ENCODE measurements at regions of chr6 and their contacts with region 1.

Region 1: DNA sequence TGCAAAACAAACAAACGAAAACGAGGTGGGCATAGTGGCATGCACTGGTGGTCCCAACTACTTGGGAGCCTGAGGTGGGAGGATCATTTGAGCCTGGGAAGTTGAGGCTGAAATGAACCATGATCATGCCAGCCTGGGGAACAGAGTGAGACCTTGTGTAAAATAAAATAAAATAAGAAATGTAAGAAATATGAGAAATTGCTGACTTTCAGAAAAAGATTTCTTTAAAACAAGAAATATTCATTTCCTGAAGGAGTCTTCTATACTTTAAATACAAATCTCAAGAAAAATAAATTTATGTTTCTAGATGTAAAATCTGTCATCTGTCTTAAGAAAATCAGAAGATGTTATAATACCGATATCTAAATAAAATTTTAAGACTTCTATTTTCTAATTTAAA is 96.7 kb upstream of the ENPP5 start:
- DNase-seq: no peak

Region 2: DNA sequence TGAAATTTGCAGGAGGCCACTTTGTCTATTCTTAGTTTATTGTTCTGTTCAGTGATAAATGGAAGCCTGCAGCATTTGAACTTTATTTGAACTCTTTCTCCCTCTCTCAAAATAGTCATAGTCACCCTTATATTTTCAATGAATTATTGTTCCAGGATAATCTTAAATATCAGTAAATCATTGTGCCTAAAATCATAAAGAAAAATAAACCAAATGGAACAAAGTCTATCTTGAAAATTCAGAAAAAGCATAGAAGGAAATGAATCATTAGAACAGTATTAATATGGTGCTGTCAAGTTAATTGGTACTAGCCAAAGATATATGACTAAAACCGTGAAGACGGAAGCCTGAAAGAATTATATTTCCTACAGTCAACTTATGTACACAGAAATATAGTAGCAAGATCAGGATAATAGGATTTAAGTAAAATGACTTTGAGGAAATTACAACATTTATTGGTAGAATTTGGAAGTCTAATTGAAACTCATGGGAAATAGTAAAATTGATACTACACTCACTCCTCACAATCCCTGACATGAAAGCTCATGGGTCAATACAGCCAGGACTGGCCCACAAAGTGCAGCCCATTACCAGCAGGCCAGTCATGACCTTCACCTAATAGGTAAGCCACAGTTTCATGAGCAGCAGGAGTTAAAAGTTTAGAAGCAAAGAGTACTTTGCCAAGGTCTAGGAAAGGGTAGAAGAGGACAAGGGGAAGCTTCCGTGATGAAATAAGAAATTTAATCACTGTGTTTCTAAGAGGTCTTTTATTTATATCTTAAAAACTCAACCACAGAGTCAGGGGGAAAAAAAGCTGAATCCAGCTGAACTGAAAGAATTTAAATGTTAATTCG is 23.1 kb after region 1 on chr6:
- intact Hi-C with region 1: no loop called
- DNase-seq: no peak

Region 3: GRCh38 chr6:46340246-46340645 is 72.7 kb after region 1 on chr6:
- intact Hi-C with region 1: loop called in 1 of 2 experiments (anchors 2 kb)
- DNase-seq: no peak